ENCODE measurements at regions of chr16 and their contacts with region 1.

Region 1: DNA sequence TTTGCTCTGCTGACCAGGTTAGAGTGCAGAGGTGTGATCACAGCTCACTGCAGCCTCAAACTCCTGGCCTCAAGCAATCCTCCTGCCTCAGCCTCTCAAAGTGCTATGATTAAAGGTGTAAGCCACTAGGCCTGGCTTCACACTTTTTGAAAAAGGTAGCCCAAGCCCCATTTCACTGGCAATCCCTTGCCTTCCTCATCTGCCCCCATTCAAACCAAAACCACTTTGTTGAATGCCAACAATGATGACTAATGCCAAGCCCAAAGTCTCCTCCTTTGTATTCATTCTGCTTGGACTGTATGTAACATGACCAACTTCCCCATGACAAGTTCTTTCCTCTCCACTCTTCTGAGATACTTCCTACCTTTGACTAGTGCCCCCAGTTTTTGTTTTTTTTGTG is 33.1 kb downstream of the N4BP1 start:
- DNase-seq: peak; percentile 66
- H3K4me3 Mint-ChIP-seq: no peak overlapping the region
- H3K27ac Mint-ChIP-seq: peak overlapping the region; percentile 56
- H3K4me1 Mint-ChIP-seq: peaks cover 59% of the 10 kb centered on the region
- H3K27me3 Mint-ChIP-seq: no peaks in the 10 kb centered on the region

Region 2: DNA sequence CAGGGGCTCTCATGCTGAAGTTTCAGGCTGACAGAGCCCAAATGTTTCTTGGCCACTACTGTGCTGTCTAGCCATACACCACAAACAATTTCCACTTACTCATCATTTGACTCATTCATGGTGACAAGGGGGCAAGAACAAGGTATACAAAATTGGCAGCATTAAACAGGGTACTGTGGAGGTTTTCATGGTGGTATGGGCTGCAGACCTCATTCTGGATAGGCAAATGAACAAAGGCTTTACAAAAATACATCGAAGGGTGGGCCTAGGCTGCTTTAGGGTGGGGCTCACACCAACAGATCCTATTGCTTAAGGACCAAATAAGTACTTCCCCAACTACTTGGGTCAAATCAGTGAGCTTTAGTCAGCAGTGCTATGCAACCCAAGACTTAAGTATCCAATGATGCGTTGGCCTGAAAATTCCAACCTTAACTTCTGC is 20.0 kb before region 1 on chr16:
- CTCF ChIA-PET with region 1: no interaction called
- intact Hi-C with region 1: loop called (anchors 2 kb)
- DNase-seq: peak; percentile 43
- H3K4me3 Mint-ChIP-seq: no peak overlapping the region
- H3K27ac Mint-ChIP-seq: peak overlapping the region; percentile 58
- H3K4me1 Mint-ChIP-seq: peaks cover 80% of the 10 kb centered on the region
- H3K27me3 Mint-ChIP-seq: no peaks in the 10 kb centered on the region

Region 3: GRCh38 chr16:48565752-48566151 is 11.2 kb before region 1 on chr16:
- CTCF ChIA-PET with region 1: no interaction called
- intact Hi-C with region 1: loop called (anchors 1 kb)
- DNase-seq: no peak
- H3K4me3 Mint-ChIP-seq: no peak overlapping the region
- H3K27ac Mint-ChIP-seq: no peak overlapping the region
- H3K4me1 Mint-ChIP-seq: peaks cover 59% of the 10 kb centered on the region
- H3K27me3 Mint-ChIP-seq: no peaks in the 10 kb centered on the region

Region 4: GRCh38 chr16:48596326-48596725 is 19.4 kb after region 1 on chr16:
- CTCF ChIA-PET with region 1: no interaction called
- intact Hi-C with region 1: loop called (anchors 2 kb)
- DNase-seq: peak; percentile 71
- H3K4me3 Mint-ChIP-seq: no peak overlapping the region
- H3K27ac Mint-ChIP-seq: peak overlapping the region; percentile 79
- H3K4me1 Mint-ChIP-seq: peaks cover 51% of the 10 kb centered on the region
- H3K27me3 Mint-ChIP-seq: no peaks in the 10 kb centered on the region

Measured in activated naive CD4-positive, alpha-beta T cell treated with anti-CD3 and anti-CD28 coated beads for 36 hours (primary cell).